CD8-positive, alpha-beta T cell (primary cell): ENCODE measurements at regions of chr3 and their contacts with region 1.

Region 1: DNA sequence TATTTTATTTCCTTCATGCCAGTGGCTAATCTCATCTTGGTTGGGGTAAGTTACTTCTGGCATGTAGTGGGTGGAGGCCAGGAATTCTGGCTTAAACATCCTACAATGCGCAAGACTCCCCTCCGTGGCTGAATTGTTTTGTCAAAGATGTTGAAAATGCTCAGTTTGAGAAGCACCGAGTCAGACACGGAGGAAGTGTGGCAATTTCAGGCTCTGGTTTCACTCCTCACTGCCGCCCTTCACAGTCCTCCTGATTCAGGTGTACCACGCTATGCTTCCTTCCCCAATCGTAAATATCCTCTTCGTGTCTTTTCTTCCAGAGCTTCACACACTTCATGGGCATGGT is 150.7 kb downstream of the OPA1 start:
- DNase-seq: peak in 1 of 9 experiments; percentile 7
- ATAC-seq: no peak
- H3K4me3 ChIP-seq: no peak overlapping the region
- H3K4me3 Mint-ChIP-seq: no peak overlapping the region
- H3K27ac ChIP-seq: no peak overlapping the region
- H3K27ac Mint-ChIP-seq: no peak overlapping the region
- H3K4me1 ChIP-seq: no peaks in the 10 kb centered on the region
- H3K4me1 Mint-ChIP-seq: peaks cover 2% of the 10 kb centered on the region
- H3K27me3 ChIP-seq: no peaks in the 10 kb centered on the region
- H3K27me3 Mint-ChIP-seq: peaks cover 8% of the 10 kb centered on the region
- CTCF ChIP-seq: no peak

Region 2: GRCh38 chr3:192259661-192260060 is 1484.0 kb before region 1 on chr3:
- CTCF ChIA-PET with region 1: no interaction called
- POLR2A ChIA-PET with region 1: no interaction called
- intact Hi-C with region 1: loop called in 1 of 2 experiments (anchors 10 kb)
- DNase-seq: no peak
- ATAC-seq: no peak
- H3K4me3 ChIP-seq: no peak overlapping the region
- H3K4me3 Mint-ChIP-seq: no peak overlapping the region
- H3K27ac ChIP-seq: no peak overlapping the region
- H3K27ac Mint-ChIP-seq: no peak overlapping the region
- H3K4me1 ChIP-seq: no peaks in the 10 kb centered on the region
- H3K4me1 Mint-ChIP-seq: no peaks in the 10 kb centered on the region
- H3K27me3 ChIP-seq: no peaks in the 10 kb centered on the region
- H3K27me3 Mint-ChIP-seq: no peaks in the 10 kb centered on the region
- CTCF ChIP-seq: no peak